ENCODE measurements at regions of chr19 and their contacts with region 1.

Region 1: GRCh38 chr19:53132141-53132991 is at the start of gene ZNF415:
- DNase-seq: peak; percentile 86 to 90 (median 87)
- H3K4me3 ChIP-seq: peak within 1 kb of the TSS; percentile 60
- H3K27ac ChIP-seq: peak within 1 kb of the TSS in 1 of 2 donors; percentile 7
- H3K4me1 ChIP-seq: peaks cover 4% of the 10 kb centered on the region
- H3K27me3 ChIP-seq: no peaks in the 10 kb centered on the region
- CTCF ChIP-seq: no peak
- EP300 ChIP-seq: no peak
- POLR2A ChIP-seq: no peak
- total RNA-seq, gene ZNF415: 7.0 to 18.6 (median 12.4) TPM

Region 2: GRCh38 chr19:53103198-53103944 is 29.0 kb before region 1 on chr19 and contains the start of gene ZNF160:
- intact Hi-C with region 1: loop called in 2 of 4 experiments (anchors 2 kb)
- DNase-seq: peak; percentile 98 to 99 (median 98)
- H3K4me3 ChIP-seq: peak within 1 kb of the TSS; percentile 69
- H3K27ac ChIP-seq: peak within 1 kb of the TSS; percentile 60 to 72
- H3K4me1 ChIP-seq: peaks cover 7% of the 10 kb centered on the region
- H3K27me3 ChIP-seq: no peaks in the 10 kb centered on the region
- CTCF ChIP-seq: no peak
- EP300 ChIP-seq: no peak
- POLR2A ChIP-seq: peak; percentile 73
- total RNA-seq, gene ZNF160: 34.3 to 53.2 (median 37.6) TPM

Measured in ovary (tissue), 10 donors.